HepG2 (cell line): ENCODE measurements at regions of chr1 and their contacts with region 1.

Region 1: DNA sequence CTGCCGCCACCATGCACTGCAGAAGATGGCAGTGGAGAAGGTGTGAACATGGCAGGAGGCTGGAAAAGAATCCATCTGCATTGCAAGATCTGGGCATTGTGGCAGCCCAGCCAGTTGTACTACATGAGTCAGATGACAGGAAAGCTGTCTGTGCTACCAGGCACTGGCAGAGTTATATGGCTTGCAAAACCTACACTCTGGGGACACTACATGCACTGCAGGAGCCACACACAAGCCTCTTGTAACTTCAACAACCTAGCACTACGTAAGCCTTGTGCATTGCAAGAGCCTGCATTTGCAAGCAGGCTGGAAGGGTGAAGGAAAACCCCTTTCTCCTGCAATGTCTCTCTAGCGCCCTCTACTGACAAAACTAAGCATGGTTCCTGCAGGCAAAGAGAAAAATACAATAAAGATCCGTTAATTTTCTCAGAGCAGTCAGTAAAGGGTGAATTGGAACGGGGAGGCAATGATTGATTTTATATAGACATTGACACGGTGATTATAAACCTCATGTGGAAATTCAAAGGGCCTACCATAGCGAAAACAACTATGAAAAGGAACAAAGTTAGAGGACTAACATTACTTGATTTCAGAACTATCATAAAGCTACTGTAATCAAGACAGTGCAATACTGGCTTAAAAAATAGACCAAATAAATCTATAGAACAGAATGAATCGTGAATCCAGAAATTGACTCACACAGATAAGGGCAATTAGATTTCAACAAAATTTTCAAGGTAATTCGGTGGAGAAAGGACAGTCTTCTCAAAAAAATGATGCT is 26.2 kb upstream of the DYNLT5 start:
- DNase-seq: peak; percentile 54
- ATAC-seq: peak; percentile 86
- H3K4me3 ChIP-seq: no peak overlapping the region
- H3K27ac ChIP-seq: no peak overlapping the region
- H3K4me1 ChIP-seq: no peaks in the 10 kb centered on the region
- H3K27me3 ChIP-seq: no peaks in the 10 kb centered on the region
- CTCF ChIP-seq: peak; percentile 87
- EP300 ChIP-seq: no peak
- POLR2A ChIP-seq: no peak
- RAD21 ChIP-seq: peak; percentile 54

Region 2: DNA sequence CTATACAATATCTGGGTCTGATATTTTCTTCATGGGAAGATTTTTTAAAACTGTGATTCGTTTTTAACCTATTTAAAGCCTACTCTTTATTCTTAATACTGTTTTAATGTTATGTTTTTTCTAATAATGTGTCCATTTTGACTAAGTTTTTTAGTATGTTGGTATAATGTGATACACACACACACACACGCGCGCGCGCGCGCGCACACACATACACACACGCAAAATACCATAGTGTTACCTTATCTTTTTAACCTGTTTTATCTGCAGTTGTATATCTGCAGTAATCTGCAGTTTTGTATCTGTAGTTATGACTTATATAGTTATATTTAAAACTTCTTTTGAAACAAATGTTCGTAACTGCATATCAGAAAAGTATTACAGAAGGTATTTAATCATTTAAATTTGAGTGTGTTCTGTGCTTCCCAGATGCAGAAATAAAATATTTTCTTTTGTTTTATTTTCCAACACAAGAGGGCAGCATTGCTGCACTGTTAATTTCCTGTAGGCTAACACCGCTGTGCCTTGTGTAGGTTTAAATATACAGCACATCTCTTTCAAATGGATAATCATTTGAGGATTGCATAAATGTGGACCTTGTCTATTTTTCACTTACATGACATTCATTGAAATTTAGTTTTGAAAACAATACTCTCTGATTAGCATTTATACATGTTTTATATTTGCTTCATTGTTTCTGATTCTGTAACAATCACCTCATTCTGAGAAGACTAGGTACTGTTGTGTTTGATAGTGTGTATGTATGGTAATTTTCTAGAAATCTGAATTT is 767.3 kb before region 1 on chr1:
- CTCF ChIA-PET with region 1: interaction called, 4 read pairs
- POLR2A ChIA-PET with region 1: no interaction called
- in situ Hi-C with region 1: loop called (anchors 25 kb)
- intact Hi-C with region 1: no loop called
- DNase-seq: peak; percentile 16
- ATAC-seq: peak; percentile 67
- H3K4me3 ChIP-seq: no peak overlapping the region
- H3K27ac ChIP-seq: no peak overlapping the region
- H3K4me1 ChIP-seq: no peaks in the 10 kb centered on the region
- H3K27me3 ChIP-seq: no peaks in the 10 kb centered on the region; a peak in 1 of 5 replicates
- CTCF ChIP-seq: peak; percentile 73
- EP300 ChIP-seq: no peak
- POLR2A ChIP-seq: no peak
- RAD21 ChIP-seq: peak; percentile 47; the same call in 1 of the 2 replicates

Region 3: DNA sequence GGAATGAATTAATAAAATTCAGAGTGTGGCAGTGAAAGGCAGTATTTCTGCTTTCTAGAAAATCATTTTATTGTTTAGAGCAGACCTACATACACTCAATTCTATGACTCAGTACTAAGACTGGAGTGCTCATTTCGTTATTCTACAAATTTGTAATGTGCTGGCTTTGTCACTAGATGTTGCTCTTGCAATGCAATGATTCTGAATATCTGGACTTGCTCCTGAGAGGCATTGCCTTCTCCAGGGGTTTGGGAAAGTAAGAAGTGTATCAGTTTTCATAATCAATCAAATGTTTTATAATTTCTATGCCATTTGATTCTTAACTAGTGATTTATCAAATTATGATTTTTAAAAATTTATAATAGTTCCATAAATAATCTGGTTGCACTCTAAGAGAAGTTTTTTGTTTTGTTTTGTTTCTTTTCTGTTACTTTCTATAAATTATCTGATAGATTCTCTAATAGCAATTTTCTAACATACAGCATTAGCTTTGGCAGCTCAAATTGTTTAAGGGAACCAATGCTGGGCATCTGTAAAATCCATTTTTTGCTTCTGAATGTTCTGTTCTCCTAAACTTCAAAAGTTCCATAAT is 472.6 kb before region 1 on chr1:
- CTCF ChIA-PET with region 1: interaction called, 6 read pairs
- POLR2A ChIA-PET with region 1: no interaction called
- in situ Hi-C with region 1: no loop called
- intact Hi-C with region 1: loop called (anchors 1 kb)
- DNase-seq: peak; percentile 26
- ATAC-seq: peak; percentile 79
- H3K4me3 ChIP-seq: no peak overlapping the region
- H3K27ac ChIP-seq: no peak overlapping the region
- H3K4me1 ChIP-seq: no peaks in the 10 kb centered on the region
- H3K27me3 ChIP-seq: no peaks in the 10 kb centered on the region; a peak in 1 of 5 replicates
- CTCF ChIP-seq: peak; percentile 72
- EP300 ChIP-seq: no peak
- POLR2A ChIP-seq: no peak
- RAD21 ChIP-seq: no peak

Region 4: GRCh38 chr1:66262211-66262963 is 463.7 kb before region 1 on chr1:
- CTCF ChIA-PET with region 1: no interaction called
- POLR2A ChIA-PET with region 1: no interaction called
- in situ Hi-C with region 1: loop called (anchors 10 kb)
- intact Hi-C with region 1: no loop called
- DNase-seq: no peak
- ATAC-seq: no peak
- H3K4me3 ChIP-seq: no peak overlapping the region
- H3K27ac ChIP-seq: no peak overlapping the region
- H3K4me1 ChIP-seq: no peaks in the 10 kb centered on the region
- H3K27me3 ChIP-seq: no peaks in the 10 kb centered on the region
- CTCF ChIP-seq: no peak
- EP300 ChIP-seq: no peak
- POLR2A ChIP-seq: no peak
- RAD21 ChIP-seq: no peak

Region 5: DNA sequence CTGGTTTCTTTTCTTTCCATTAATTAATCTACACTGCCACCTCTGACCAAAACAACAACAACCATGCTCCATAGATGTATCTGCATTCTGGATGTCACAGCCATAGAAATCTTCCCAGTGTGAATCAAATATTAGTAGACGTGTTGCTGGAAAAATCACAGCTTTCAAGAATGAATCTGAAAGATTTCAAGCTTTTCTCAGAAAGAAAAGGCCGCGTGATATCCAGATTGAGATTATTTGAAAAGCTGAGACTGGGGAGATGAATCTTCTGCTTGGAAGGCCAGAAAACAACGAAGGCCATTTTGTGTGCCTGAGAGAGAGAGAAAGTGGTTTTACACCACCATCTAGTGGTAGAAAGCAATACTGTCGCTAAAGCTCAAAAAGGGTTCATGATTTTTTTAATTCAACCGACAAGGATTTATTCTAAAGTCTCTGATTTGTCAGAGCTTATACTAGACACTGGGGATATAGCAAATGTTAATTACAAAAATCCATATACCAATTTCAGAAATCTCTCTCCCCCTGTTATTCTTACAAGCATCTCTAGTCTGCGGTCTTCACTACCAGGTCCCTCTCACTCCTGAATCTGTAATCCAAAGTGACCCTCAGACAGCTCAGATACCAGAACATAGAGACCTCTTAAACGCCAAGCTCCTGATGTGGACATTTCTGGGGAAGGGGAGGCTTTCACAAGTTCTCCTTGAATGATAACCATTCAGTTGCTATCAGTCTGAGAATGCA is 279.6 kb before region 1 on chr1:
- CTCF ChIA-PET with region 1: no interaction called
- POLR2A ChIA-PET with region 1: no interaction called
- in situ Hi-C with region 1: no loop called
- intact Hi-C with region 1: loop called (anchors 1 kb)
- DNase-seq: peak; percentile 47
- ATAC-seq: peak; percentile 77; the same call in 2 of the 3 replicates
- H3K4me3 ChIP-seq: no peak overlapping the region
- H3K27ac ChIP-seq: no peak overlapping the region
- H3K4me1 ChIP-seq: no peaks in the 10 kb centered on the region
- H3K27me3 ChIP-seq: no peaks in the 10 kb centered on the region
- CTCF ChIP-seq: peak; percentile 78
- EP300 ChIP-seq: no peak
- POLR2A ChIP-seq: no peak
- RAD21 ChIP-seq: no peak

Region 6: GRCh38 chr1:66503841-66504470 is 222.1 kb before region 1 on chr1:
- CTCF ChIA-PET with region 1: no interaction called
- POLR2A ChIA-PET with region 1: no interaction called
- in situ Hi-C with region 1: no loop called
- intact Hi-C with region 1: loop called (anchors 5 kb)
- DNase-seq: peak; percentile 30
- ATAC-seq: peak; percentile 81
- H3K4me3 ChIP-seq: no peak overlapping the region
- H3K27ac ChIP-seq: no peak overlapping the region
- H3K4me1 ChIP-seq: no peaks in the 10 kb centered on the region
- H3K27me3 ChIP-seq: no peaks in the 10 kb centered on the region
- CTCF ChIP-seq: peak; percentile 69
- EP300 ChIP-seq: no peak
- POLR2A ChIP-seq: no peak
- RAD21 ChIP-seq: 0 out of 2 replicates have a peak, but pooled peaks have one; percentile 25

Region 7: GRCh38 chr1:66624412-66625060 is 101.5 kb before region 1 on chr1:
- CTCF ChIA-PET with region 1: no interaction called
- POLR2A ChIA-PET with region 1: no interaction called
- in situ Hi-C with region 1: no loop called
- intact Hi-C with region 1: no loop called
- DNase-seq: no peak
- ATAC-seq: no peak
- H3K4me3 ChIP-seq: no peak overlapping the region
- H3K27ac ChIP-seq: no peak overlapping the region
- H3K4me1 ChIP-seq: no peaks in the 10 kb centered on the region
- H3K27me3 ChIP-seq: no peaks in the 10 kb centered on the region
- CTCF ChIP-seq: no peak
- EP300 ChIP-seq: no peak
- POLR2A ChIP-seq: no peak
- RAD21 ChIP-seq: no peak